Activated naive CD4-positive, alpha-beta T cell treated with anti-CD3 and anti-CD28 coated beads, Interleukin-2, amount 10 ng/mL, durations not matched to agents 7 days and 5 days (primary cell): ENCODE measurements at regions of chr6 and their contacts with region 1.

Region 1: DNA sequence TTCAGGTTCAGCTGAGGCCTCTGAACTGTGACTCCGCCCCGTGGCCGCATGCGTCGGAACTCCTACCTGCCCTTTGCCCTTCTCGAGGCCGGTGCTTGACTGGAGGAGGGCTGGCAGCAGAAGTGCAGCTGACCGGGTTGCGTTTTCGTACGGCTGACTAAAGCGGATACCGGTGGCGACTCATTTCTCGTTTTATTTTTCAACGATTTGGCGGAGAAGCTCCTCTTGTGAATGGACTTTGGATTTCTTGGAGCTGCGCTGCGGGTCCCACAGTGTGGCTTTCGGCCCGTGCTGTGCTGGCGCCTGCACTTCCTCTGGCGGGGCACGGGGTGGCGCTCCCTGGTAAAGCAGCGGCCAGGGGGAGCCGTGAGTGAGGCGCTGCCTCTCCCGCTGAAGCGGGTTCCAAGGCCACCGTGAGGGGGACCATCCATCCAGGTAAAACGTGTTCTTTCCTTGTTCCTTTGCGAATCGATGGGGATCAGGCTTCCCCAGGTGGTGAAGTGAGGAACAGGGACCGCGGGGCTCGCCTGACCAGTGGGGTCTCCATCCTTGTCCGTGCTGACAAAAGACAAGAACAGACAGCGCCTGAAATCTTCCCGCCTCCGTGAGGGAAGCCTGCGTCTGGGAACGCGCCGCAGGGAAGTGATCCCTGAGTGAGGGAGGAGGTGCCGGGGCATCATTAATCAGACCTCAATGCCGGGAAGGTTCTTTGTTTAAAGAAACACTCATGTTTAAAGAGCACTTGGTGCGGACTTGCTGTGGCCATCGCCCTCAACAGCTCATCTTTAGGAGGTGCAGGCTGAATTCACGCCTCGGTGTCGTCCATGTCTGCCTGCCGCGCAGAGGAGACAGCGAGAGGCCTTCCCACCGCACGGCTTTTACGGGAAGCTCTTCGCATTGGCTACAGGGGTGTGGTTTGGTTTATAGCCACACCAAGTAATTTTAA is 38.8 kb downstream of the ERMARD start:
- DNase-seq: peak; percentile 79
- H3K4me3 Mint-ChIP-seq: peak overlapping the region; percentile 72
- H3K27ac Mint-ChIP-seq: no peak overlapping the region
- H3K4me1 Mint-ChIP-seq: peaks cover 20% of the 10 kb centered on the region
- H3K27me3 Mint-ChIP-seq: peaks cover 61% of the 10 kb centered on the region

Region 2: GRCh38 chr6:169800668-169801395 is 10.6 kb after region 1 on chr6:
- CTCF ChIA-PET with region 1: interaction called, 35 read pairs
- DNase-seq: no peak
- H3K4me3 Mint-ChIP-seq: no peak overlapping the region
- H3K27ac Mint-ChIP-seq: no peak overlapping the region
- H3K4me1 Mint-ChIP-seq: peaks cover 28% of the 10 kb centered on the region
- H3K27me3 Mint-ChIP-seq: peaks cover 75% of the 10 kb centered on the region

Region 3: DNA sequence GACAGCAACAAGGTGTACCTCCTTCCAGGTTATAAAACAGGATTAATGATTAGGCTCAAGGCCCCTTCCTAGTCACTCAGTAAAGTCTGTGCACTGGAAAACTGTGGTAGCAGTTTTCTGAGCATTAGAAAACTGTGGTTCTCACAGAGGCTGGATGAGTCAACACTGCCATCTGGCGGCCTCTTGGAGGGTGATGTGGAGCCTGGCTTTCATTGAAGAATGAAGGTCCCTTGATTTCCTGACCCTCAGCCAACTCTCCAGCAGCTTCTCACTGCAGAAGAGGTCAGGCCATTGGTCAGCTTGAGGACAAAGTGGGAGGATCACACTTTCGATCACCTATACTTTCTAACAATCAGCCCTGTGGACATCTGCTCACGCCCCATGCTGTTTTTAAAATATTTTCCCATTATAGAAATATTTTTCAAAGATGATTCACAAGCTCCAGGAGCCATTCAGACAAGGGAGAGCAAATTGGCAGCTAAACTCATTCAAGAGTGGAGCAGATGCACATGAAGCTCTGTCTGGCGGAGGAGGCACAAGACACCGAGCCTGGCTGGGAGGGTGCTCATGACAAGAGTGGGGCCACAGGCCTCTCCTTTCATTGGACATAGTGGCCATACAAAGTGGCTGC is 739.7 kb after region 1 on chr6:
- CTCF ChIA-PET with region 1: interaction called, 13 read pairs
- DNase-seq: peak; percentile 77
- H3K4me3 Mint-ChIP-seq: no peak overlapping the region
- H3K27ac Mint-ChIP-seq: no peak overlapping the region
- H3K4me1 Mint-ChIP-seq: peaks cover 10% of the 10 kb centered on the region
- H3K27me3 Mint-ChIP-seq: peaks cover 3% of the 10 kb centered on the region